SK-N-SH (cell line): ENCODE measurements at regions of chr18 and their contacts with region 1.

Region 1: DNA sequence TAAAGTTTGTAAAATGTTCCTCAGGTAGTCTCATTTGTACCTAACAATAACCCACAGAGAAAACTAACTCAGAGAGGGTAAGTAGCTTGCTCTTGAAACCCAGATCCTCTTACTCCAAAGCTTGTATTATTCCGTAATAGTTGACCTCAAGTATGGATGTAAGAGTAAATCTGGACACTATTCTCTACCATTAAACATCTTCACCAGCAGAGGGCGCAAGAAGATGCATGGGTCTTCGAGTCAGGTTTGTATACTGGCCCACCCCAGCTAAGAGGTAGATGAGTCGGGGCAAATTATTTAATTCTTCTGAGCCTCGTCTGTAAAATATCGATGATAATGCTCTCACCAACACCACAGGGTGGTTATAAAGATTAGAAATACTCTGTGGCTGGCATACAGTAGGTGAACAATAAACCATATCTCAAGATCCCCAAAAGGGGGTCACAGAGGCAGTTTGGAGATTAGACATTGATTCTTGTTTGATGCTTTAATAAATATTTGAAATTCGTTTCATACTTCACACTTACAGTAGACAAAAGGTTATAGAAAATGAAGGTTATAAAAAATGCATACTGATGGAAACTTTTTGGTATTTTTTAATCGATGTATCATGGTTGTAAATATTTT is 3.5 kb upstream of the CABLES1 start:
- DNase-seq: peak; percentile 78
- H3K4me3 ChIP-seq: no peak overlapping the region; a peak in 1 of 4 replicates
- H3K27ac ChIP-seq: no peak overlapping the region
- H3K4me1 ChIP-seq: peaks cover 5 to 20% of the 10 kb centered on the region in 2 experiments; a peak in 2 of 4 replicates
- H3K27me3 ChIP-seq: no peaks in the 10 kb centered on the region
- CTCF ChIP-seq: peak; percentile 86
- EP300 ChIP-seq: no peak
- RAD21 ChIP-seq: peak; percentile 92

Region 2: GRCh38 chr18:23121133-23121532 is 10.7 kb before region 1 on chr18:
- CTCF ChIA-PET with region 1: interaction called, 22 read pairs
- POLR2A ChIA-PET with region 1: no interaction called
- DNase-seq: no peak
- H3K4me3 ChIP-seq: no peak overlapping the region
- H3K27ac ChIP-seq: no peak overlapping the region
- H3K4me1 ChIP-seq: peaks cover 0 to 4% of the 10 kb centered on the region in 2 experiments; a peak in 1 of 4 replicates
- H3K27me3 ChIP-seq: no peaks in the 10 kb centered on the region
- CTCF ChIP-seq: no peak
- EP300 ChIP-seq: no peak
- RAD21 ChIP-seq: no peak

Region 3: GRCh38 chr18:23377669-23378301 is 246.0 kb after region 1 on chr18:
- CTCF ChIA-PET with region 1: interaction called, 149 read pairs
- POLR2A ChIA-PET with region 1: interaction called, 4 read pairs
- DNase-seq: no peak
- H3K4me3 ChIP-seq: no peak overlapping the region
- H3K27ac ChIP-seq: peak overlapping the region in 1 of 2 experiments; percentile 82; a peak in 2 of 4 replicates
- H3K4me1 ChIP-seq: peaks cover 0 to 30% of the 10 kb centered on the region in 2 experiments; a peak in 1 of 4 replicates
- H3K27me3 ChIP-seq: no peaks in the 10 kb centered on the region
- CTCF ChIP-seq: no peak
- EP300 ChIP-seq: peak in 1 of 2 experiments; percentile 58; a peak in 2 of 4 replicates
- RAD21 ChIP-seq: no peak